ENCODE measurements at regions of chr15 and their contacts with region 1.

Region 1: GRCh38 chr15:88615303-88616107 is 5.6 kb upstream of the AEN start:
- DNase-seq: no peak
- H3K4me3 ChIP-seq: no peak overlapping the region
- CTCF ChIP-seq: no peak

Region 2: DNA sequence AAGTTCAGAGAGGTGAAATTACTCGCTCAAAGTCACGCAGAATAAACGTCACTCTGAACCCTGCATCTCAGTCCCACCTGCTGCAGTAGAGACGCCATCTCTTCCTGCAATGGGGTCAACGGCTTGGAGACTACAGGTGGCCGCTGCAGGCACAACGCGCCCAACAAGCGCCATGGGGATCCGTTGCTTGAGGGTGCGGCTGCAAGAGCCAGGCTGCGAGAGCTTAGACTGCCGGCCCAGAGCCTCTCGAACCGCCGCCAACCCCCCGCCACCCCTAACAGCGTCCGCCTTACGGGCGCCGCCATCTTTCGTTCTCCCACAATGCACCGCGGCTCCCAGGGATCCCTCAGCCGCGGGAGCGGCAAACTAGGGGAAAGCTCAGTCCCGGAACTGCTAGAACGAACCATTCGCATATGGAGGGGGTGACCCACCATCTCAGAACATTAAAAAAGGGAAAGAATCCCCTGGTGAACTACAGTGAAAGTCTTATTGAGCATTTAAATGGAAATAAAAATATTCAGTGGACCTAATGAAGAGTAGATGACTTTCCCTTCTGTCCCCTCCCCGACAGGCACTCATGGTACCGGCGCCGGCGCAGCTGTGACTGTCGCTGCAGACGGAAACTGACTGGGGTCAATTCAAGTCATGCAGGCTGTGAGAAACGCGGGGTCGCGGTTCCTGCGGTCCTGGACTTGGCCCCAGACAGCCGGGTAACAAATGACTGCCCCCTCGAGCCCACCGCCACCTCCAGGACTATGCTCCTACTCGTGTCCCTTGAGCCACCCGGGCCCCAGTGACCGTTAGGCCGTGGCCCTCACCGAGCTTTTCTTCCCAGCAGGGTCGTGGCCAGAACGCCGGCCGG is 148.2 kb before region 1 on chr15 and contains the starts of genes MRPL46 and MRPS11:
- CTCF ChIA-PET with region 1: interaction called, 21 read pairs
- POLR2A ChIA-PET with region 1: no interaction called
- DNase-seq: peak; percentile 14
- H3K4me3 ChIP-seq: peak within 1 kb of the TSS; percentile 99
- CTCF ChIP-seq: no peak

Region 3: DNA sequence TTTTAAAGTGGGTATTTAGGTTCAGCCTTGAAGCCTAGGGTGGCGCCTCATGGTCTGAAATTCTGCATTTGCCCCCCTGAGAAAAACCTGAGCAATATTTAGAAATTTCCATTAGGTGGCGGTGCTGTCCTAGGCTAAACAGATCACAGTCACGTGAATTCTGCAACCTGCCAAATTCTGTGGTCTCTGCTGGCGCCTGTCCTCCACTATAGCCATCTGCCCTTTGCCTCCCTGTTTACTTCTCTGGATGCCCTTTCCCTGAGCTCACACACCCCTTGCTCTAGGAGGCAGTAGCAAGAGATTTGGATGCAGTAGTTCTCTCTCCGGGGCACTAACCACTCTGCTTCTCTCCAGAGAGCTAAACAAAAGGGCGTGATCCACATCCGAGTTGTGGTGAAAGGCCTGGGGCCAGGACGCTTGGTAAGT is 138.9 kb before region 1 on chr15:
- CTCF ChIA-PET with region 1: interaction called, 36 read pairs
- POLR2A ChIA-PET with region 1: no interaction called
- DNase-seq: no peak
- H3K4me3 ChIP-seq: no peak overlapping the region
- CTCF ChIP-seq: peak; percentile 38

Region 4: GRCh38 chr15:88674661-88675060 is 59.2 kb after region 1 on chr15:
- CTCF ChIA-PET with region 1: no interaction called
- POLR2A ChIA-PET with region 1: no interaction called
- DNase-seq: no peak
- H3K4me3 ChIP-seq: no peak overlapping the region
- CTCF ChIP-seq: no peak

Measured in AG04449 (cell line).